Cardiac septum (tissue), 1 donor: ENCODE measurements at regions of chr11 and their contacts with region 1.

Region 1: DNA sequence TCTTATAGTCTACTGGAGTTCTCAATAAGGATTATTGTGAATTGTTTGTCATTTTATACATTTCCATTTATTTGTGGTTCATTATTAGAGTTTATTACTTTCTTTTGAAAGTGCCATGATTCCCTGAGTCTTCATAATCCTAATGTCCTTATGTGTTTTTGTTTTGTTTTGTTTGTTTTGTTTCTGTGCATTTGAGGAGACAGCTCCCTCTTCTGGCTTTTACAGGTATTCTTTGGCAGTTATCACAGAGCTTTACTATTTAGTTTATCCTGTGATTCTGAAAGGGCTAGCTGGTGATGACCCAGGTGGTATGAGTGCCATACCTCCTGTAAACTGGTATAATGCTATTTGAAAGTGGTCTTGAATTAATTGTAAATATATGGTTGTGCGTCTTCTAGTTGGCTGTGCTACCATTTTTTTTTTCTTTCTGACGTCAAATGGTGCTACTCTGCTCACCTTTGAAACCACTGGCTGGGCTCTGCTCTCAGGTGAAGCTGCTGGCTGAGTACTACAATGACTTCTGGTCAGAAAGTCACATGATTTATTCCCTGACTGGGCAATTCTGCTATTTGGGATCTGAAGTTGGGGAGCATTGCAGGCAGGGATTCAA is 751.2 kb downstream of the JRKL start:
- DNase-seq: no peak

Region 2: DNA sequence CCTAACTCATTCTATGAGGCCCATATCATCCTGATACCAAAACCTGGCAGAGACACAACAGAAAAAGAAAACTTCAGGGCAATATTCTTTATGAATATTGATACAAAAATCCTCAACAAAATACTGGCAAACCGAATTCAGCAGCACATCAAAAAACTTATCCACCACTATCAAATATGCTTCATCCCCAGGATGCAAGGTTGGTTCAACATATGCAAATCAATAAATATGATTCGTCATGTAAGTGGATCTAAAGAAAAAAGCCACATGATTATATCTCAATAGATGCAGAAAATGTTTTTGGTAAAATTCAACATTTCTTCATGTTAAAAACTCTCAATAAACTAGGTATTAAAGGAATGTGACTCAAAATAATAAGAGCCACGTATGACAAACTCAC is 710.3 kb before region 1 on chr11:
- intact Hi-C with region 1: no loop called
- DNase-seq: no peak

Region 3: GRCh38 chr11:96464700-96465307 is 676.2 kb before region 1 on chr11:
- intact Hi-C with region 1: loop called (anchors 10 kb)
- DNase-seq: no peak

Region 4: DNA sequence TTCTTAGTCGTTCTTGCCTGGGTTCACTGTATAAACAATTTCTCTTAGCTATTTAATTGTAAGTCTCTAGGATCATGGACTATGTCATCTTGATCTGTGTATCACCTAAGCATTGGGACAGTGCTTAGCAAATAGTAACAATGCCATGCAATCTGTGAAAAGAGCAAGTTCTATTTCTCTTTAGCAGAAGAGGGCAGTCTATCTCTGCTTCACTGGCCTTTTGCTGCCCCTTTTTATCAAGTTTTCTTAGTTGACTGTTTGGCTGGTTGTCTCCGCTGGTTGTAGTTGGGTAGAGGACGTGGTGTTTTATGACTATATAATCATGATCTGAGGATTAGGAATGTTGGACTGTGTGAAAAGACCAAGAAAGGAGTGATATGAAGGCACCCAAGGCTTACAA is 436.1 kb before region 1 on chr11:
- intact Hi-C with region 1: loop called (anchors 10 kb)
- DNase-seq: no peak

Region 5: DNA sequence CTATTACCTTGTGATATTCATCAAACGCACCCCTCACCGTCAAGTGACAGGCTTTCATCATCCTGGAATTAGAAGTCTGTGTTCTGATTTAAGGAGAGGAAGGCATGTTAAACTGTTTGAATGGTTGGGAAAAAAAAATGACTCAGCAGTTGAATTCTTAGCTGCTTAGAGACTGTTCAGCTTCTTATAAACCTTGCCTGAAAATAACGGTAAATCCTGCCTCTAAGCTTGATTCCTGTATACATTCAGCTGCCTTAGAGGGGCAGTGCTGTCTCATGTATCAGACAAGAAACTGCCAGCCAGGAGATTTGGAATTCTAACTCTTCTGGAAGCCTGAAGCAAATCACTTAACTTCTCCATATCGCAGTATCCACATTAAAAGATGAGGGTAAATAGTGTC is 313.8 kb before region 1 on chr11:
- intact Hi-C with region 1: loop called (anchors 10 kb)
- DNase-seq: no peak

Region 6: DNA sequence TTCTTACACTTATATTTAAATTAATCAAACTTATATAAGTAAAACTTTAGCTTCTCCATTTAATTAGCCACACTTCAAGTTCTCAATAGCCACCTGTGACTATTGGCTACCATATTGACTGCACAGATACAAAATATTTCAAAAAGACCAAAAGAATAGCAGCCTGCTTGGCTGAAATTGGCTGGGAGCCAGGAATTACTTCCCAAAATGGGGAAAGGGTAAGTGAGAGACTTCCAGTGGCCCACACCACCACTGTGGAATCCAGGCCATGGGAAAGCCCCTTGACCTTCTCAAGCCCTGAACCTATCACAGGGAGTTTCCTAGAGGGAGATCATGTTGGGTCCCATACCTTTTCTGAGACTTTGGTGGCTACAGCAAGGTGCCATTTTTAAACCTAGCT is 81.5 kb before region 1 on chr11:
- intact Hi-C with region 1: no loop called
- DNase-seq: no peak

Region 7: DNA sequence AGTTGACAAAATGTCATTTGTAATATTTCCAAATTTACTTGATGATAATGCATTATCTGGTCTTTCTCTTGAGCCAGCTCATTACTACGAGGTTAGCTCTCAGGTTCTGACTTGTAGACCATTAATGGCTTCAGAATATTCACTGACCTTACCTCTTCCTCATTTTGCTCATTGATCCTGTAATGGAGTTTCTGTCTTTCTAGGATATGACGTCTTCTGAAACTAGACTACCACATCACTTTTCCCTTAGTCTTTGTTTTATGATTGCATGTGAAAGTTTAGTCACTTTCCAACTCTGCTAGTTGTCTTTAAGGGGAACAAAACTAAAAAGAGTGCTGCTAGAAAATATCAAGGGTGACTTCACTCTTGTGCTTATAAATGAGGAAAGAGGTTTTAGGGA is 53.6 kb before region 1 on chr11:
- intact Hi-C with region 1: no loop called
- DNase-seq: no peak

Region 8: GRCh38 chr11:97567801-97568200 is 426.8 kb after region 1 on chr11:
- intact Hi-C with region 1: no loop called
- DNase-seq: no peak